B cell (primary cell): ENCODE measurements at regions of chr2 and their contacts with region 1.

Region 1: DNA sequence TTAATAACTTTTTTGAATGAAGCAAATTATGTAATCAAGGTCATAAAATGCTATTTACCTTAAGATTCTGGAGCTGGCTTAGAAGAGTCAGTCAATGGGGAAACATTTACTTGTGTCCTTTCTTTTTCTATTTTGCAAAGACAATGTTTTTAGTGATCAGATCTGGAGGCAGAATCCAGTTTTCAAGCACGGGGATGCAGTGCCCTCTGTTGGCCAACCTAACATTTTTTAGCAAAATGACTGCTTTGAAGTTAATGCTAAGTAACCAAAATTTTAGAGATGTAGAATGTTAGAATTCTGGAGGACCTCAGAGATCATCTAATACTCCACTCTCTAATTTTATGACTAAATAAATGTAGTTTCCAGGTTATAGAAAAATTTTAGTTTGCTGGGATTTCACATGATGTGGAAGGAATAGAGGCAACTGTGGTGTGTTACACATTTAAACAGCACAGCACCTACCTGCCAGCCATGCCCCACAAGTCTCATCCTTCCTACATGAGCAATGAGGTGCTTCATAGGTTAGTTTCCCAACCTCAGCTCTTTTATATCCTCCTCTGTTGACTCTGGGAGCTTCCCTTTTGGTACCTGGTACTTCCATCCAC is 23.6 kb upstream of the SLC9A4 start:
- DNase-seq: peak; percentile 60
- ATAC-seq: no peak
- H3K4me3 ChIP-seq: no peak overlapping the region
- H3K4me3 Mint-ChIP-seq: no peak overlapping the region
- H3K27ac ChIP-seq: no peak overlapping the region
- H3K27ac Mint-ChIP-seq: no peak overlapping the region
- H3K4me1 ChIP-seq: no peaks in the 10 kb centered on the region
- H3K4me1 Mint-ChIP-seq: no peaks in the 10 kb centered on the region
- H3K27me3 ChIP-seq: no peaks in the 10 kb centered on the region
- H3K27me3 Mint-ChIP-seq: peaks cover 4% of the 10 kb centered on the region
- CTCF ChIP-seq: peak; percentile 78

Region 2: GRCh38 chr2:102251042-102251848 is 198.2 kb before region 1 on chr2:
- CTCF ChIA-PET with region 1: interaction called, 18 read pairs
- POLR2A ChIA-PET with region 1: no interaction called
- intact Hi-C with region 1: loop called (anchors 1 kb)
- DNase-seq: peak; percentile 65
- ATAC-seq: peak; percentile 57
- H3K4me3 ChIP-seq: peak overlapping the region in 4 of 5 experiments; percentile 17 to 49 (median 40)
- H3K4me3 Mint-ChIP-seq: peak overlapping the region; percentile 77
- H3K27ac ChIP-seq: no peak overlapping the region
- H3K27ac Mint-ChIP-seq: no peak overlapping the region
- H3K4me1 ChIP-seq: peaks cover 8 to 12% of the 10 kb centered on the region in 2 donors
- H3K4me1 Mint-ChIP-seq: peaks cover 9% of the 10 kb centered on the region
- H3K27me3 ChIP-seq: peaks cover 0 to 28% (median 7%) of the 10 kb centered on the region in 4 experiments
- H3K27me3 Mint-ChIP-seq: peaks cover 35% of the 10 kb centered on the region
- CTCF ChIP-seq: peak; percentile 70